Activated naive CD4-positive, alpha-beta T cell treated with anti-CD3 and anti-CD28 coated beads for 36 hours (primary cell): ENCODE measurements at regions of chr9 and their contacts with region 1.

Region 1: DNA sequence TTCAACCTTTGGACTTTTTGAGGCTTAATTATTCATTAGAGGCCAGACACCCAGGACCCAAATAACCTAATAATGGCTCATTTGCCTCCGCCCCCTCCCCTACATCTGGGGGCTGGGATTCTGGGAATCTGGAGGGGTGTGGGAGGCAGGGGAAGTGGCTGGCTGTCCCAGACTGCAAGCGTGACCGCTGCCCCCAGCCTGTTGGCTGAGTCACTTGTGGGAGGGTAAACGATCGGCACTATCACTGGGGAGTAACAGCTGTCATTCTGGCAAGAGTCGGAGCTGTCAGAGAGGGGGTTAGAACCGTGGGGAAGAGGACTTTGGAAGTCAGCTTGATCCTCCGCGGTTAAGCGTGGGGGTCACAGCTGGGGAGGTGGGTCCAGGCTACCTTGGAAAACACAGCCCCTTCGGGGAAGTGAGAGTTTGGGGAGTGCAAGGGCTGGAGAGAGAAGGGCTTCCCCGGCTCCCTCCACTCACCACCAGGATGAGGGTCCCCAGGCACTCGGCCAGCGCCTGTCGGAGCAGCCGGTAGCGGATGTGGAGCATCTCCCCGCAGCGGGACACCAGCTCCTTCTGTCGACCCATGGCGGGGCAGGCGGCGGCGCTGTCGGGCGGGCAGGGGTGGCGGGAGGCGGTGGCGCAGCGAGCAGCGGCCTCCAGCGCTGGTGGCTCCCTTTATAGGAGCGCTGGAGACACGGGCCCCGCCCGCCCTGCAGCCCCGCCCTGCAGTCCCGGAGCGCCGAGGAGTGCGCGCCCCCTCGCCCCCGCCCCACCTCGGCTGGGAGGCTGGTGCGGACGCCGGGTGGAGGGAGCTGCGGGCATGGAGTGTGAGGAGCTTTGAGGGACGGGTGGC is at the start of gene AQP3:
- DNase-seq: peak; percentile 85
- H3K4me3 Mint-ChIP-seq: peak within 1 kb of the TSS; percentile 86
- H3K27ac Mint-ChIP-seq: peak within 1 kb of the TSS; percentile 91
- H3K4me1 Mint-ChIP-seq: peaks cover 52% of the 10 kb centered on the region
- H3K27me3 Mint-ChIP-seq: no peaks in the 10 kb centered on the region
- total RNA-seq, gene AQP3: 7.2 to 8.1 TPM

Region 2: GRCh38 chr9:33159760-33160127 is 287.4 kb before region 1 on chr9:
- CTCF ChIA-PET with region 1: no interaction called
- intact Hi-C with region 1: loop called (anchors 1 kb)
- DNase-seq: peak; percentile 87
- H3K4me3 Mint-ChIP-seq: peak overlapping the region; percentile 64
- H3K27ac Mint-ChIP-seq: peak overlapping the region; percentile 97
- H3K4me1 Mint-ChIP-seq: peaks cover 92% of the 10 kb centered on the region
- H3K27me3 Mint-ChIP-seq: no peaks in the 10 kb centered on the region

Region 3: DNA sequence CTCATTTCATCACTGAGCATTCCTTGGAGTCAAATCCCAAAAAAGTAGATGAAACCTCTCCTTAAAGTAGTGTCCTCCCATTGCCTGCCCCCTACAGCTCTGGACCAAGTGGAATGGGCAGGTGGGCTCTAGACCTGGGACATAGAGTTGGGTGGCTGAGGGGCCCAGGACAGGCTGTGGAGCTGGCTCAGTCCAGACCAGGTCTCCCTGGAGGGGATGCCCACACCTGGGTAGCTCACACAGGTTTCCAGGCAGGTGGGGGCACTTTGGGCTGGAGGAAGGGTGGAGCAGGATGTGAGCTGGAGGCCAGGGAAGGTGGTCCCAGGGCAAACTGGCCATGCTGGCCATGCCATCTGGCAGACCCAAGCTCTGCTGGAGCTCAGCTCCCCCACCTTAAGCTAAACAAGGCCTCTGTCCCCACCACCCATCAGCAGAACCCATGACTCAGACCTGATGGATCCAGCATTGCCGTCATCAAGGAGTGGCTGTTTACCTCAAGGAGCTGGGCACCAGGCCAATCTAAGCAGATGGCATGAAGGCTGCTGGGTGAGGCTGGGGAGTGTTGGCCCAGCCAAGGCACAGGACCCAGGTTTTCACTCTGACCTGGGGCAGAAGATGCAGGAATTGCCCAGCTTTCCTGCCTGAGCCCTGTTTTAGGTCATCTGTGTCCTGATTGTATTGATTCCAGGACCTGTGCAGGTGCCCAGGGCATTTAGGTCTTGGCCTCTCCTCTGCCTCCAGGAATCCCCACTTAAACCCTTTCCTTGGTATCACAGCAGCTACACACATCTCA is 213.3 kb before region 1 on chr9:
- CTCF ChIA-PET with region 1: no interaction called
- intact Hi-C with region 1: no loop called
- DNase-seq: peak; percentile 22
- H3K4me3 Mint-ChIP-seq: no peak overlapping the region
- H3K27ac Mint-ChIP-seq: no peak overlapping the region
- H3K4me1 Mint-ChIP-seq: no peaks in the 10 kb centered on the region
- H3K27me3 Mint-ChIP-seq: no peaks in the 10 kb centered on the region

Region 4: DNA sequence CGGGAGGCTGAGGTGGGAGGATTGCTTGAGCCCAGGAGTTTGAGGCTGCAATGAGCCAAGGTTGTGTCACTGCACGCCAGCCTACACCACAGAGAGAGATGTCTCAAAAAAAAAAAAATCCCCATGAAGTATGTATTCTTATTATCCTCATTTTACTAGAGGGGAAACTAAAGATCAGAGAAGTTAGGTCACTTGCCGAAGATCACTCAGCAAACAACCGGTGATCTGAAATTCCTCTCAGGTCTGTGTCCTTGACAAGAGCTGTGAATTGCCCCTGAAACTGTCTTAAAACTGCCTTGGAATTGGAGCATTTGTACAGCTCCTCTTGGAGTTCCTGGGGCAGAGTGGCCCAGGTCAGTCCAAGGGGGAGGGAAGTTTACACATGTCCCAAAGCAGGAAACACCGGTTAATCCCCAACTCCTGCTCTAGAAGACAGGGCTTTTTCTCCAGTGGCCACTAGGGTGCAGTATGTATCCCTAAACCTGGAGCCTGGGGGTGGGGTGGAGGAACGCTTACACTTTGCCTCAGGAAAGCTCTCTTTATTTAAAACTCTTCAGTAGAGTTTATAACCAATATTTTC is 72.4 kb before region 1 on chr9:
- CTCF ChIA-PET with region 1: interaction called, 17 read pairs
- intact Hi-C with region 1: loop called (anchors 1 kb)
- DNase-seq: peak; percentile 88
- H3K4me3 Mint-ChIP-seq: no peak overlapping the region
- H3K27ac Mint-ChIP-seq: no peak overlapping the region
- H3K4me1 Mint-ChIP-seq: peaks cover 7% of the 10 kb centered on the region
- H3K27me3 Mint-ChIP-seq: no peaks in the 10 kb centered on the region

Region 5: GRCh38 chr9:33415501-33416038 is 31.6 kb before region 1 on chr9:
- CTCF ChIA-PET with region 1: interaction called, 100 read pairs
- intact Hi-C with region 1: loop called (anchors 1 kb)
- DNase-seq: peak; percentile 98
- H3K4me3 Mint-ChIP-seq: no peak overlapping the region
- H3K27ac Mint-ChIP-seq: peak overlapping the region; percentile 89
- H3K4me1 Mint-ChIP-seq: peaks cover 43% of the 10 kb centered on the region
- H3K27me3 Mint-ChIP-seq: no peaks in the 10 kb centered on the region

Region 6: DNA sequence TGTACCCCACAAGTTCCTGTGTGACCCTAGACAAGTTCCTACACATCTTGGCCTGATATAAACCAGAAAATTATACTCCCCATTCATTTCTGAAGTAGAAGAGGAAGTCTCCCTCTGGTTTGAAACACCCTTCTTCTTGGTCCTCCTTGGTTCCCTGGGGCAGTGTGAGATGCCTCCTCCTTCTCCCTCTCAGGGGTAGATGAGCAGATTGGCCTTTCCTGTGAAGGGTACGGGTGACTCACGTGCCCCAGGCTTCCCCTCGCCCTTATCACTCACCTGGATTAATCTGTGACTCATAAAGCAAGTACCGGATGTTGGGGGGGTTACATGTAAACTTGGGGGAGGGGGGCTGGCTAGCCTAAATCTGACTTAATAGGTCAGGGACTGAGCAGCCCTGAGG is 11.3 kb after region 1 on chr9:
- CTCF ChIA-PET with region 1: interaction called, 159 read pairs
- intact Hi-C with region 1: loop called (anchors 1 kb)
- DNase-seq: peak; percentile 76
- H3K4me3 Mint-ChIP-seq: no peak overlapping the region
- H3K27ac Mint-ChIP-seq: peak overlapping the region; percentile 90
- H3K4me1 Mint-ChIP-seq: peaks cover 54% of the 10 kb centered on the region
- H3K27me3 Mint-ChIP-seq: no peaks in the 10 kb centered on the region

Region 7: DNA sequence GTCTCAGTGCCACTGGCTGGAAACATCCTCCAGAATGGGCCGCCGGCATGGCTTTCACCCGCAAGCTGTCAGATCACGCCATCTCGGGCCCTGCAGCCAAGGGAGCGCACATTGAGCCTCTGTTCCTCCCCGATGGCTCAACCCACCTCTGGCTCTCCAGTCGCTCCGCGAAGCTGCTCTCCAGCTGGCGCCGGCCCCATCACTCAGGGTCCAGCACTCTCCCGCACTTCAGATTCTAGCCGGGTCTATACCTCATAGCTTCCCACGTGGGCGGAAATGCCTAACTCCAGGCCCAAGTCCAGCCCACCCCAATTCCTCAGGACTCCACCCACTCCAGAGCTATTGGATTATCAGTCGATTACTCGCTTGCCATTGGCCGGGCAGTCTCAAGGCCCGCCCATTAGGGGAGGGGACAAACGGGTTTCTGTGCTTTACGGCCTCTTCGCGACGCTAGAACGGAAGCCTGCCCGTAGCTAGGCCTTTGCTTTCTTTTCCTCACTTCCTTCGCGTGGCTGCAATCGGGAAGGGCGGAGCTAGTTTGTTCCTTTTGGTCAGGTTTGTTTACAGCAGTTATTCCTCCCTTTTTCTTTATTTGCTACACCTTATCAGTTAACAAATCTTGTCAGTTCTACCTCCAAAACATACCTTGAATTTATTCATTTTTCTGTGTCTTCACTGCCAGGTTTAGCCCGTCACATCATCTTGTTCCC is 26.6 kb after region 1 on chr9 and contains the start of gene NOL6:
- CTCF ChIA-PET with region 1: interaction called, 159 read pairs
- intact Hi-C with region 1: loop called (anchors 1 kb)
- DNase-seq: peak; percentile 99
- H3K4me3 Mint-ChIP-seq: peak within 1 kb of the TSS; percentile 95
- H3K27ac Mint-ChIP-seq: peak within 1 kb of the TSS; percentile 93
- H3K4me1 Mint-ChIP-seq: peaks cover 29% of the 10 kb centered on the region
- H3K27me3 Mint-ChIP-seq: no peaks in the 10 kb centered on the region
- total RNA-seq, gene NOL6: 38.2 to 38.6 TPM

Region 8: GRCh38 chr9:34178520-34179212 is 731.5 kb after region 1 on chr9 and contains the start of gene UBAP1:
- CTCF ChIA-PET with region 1: no interaction called
- intact Hi-C with region 1: loop called (anchors 5 kb)
- DNase-seq: peak; percentile 99
- H3K4me3 Mint-ChIP-seq: peak within 1 kb of the TSS; percentile 84
- H3K27ac Mint-ChIP-seq: peak within 1 kb of the TSS; percentile 94
- H3K4me1 Mint-ChIP-seq: peaks cover 16% of the 10 kb centered on the region
- H3K27me3 Mint-ChIP-seq: no peaks in the 10 kb centered on the region
- total RNA-seq, gene UBAP1: 29.9 to 31.7 TPM